HAP-1 (cell line): ENCODE measurements at regions of chr1 and their contacts with region 1.

Region 1: DNA sequence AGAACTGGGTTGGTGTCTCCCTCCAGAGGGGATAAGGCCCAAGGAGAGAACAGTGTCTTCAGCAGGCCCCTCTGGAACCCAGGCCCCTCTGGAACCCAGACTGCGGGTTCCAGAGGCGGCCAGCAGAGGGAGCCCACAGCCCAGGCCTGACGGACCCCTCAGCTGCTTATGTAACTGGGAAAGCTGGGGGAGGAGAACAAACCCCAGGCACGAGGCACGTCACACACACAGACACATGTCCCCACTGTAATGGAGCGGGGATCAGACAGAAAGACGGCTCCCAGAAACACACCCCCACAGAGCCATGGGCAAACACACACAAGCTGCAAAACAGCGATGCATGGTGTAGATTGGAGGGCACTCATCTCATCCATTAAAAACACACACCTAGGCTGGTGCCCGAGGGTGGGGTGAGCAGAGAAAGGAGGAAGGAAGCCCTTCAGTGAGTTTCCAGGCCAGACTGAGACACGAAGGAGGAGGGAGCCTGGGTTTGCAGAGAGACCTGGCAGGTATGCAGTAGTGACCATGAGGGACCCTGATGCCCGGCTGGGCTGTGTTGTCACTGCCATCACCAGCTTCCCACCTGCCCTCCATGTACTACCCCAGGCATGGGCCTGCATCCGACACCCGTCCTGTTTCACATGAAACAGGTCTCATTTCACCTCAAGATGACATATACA is 2.8 kb upstream of the IGSF8 start:
- DNase-seq: peak; percentile 74 to 88
- H3K4me3 ChIP-seq: no peak overlapping the region
- H3K4me1 ChIP-seq: peaks cover 18% of the 10 kb centered on the region
- H3K27me3 ChIP-seq: no peaks in the 10 kb centered on the region

Region 2: DNA sequence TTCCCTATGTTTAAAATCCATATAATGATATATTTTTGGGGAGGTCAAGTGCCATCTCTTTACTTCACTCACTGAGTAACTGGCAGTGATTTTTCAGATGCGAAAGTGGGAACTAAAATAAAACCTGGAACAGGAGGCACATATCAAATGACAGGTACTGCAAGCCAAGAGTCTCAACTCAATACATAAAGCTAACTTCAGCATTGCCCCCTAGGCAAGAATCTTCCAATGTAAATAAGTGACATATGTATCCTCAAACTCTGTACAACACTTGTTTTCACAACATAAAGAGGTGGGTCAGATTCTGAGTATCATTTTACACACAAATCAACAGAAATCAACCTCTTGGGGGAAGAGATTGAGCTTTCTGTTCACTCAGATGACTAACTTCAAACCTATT is 143.0 kb after region 1 on chr1:
- in situ Hi-C with region 1: loop called (anchors 10 kb)
- DNase-seq: no peak
- H3K4me3 ChIP-seq: no peak overlapping the region
- H3K4me1 ChIP-seq: peaks cover 11% of the 10 kb centered on the region
- H3K27me3 ChIP-seq: no peaks in the 10 kb centered on the region

Region 3: DNA sequence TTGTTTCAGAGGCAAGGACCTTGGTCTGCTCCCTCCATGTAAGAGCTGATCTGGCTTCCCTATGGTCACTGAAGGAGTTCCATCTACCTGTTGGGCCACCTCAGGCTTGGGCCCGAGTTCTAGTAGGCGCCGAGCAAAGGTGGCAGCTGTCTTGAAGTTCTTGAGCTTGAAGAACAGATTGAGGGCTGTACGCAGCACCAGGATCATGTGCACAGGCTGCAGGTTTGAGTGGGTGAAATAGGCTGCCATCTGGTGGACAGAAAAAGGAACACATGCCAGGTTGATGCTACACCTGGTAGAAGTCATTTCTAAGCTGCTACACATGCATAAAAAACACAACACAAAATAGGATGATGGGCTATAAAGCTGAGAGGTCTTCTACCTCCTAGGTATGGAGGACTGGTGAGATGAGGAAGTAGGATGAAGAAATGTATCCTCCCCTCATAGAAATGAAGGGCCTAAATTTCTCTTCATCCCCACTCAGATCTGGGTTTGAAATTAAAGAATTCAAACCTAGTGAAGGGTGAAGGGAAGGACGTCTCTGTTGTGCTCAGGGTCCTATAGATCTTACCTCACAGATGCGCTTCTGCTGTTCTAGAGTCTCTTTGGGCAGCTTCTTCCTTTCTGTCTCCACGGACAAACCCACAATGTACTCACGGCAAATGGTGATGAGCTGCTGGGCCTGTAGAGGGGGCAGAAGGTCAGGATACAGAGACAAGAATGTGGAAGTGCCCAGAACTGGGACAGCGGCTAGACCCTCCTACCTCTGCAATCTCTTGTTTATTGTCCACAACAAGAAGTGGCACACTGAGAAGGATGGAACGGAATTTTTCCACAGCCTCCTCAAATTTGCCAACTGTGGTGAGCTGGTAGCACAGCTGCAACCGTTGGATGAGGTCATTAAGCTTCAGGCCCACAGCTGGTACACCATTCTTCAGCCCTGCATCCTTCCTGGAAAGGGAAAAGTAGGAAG is 190.4 kb after region 1 on chr1:
- in situ Hi-C with region 1: loop called (anchors 5 kb)
- DNase-seq: peak; percentile 62 to 71
- H3K4me3 ChIP-seq: no peak overlapping the region
- H3K4me1 ChIP-seq: no peaks in the 10 kb centered on the region
- H3K27me3 ChIP-seq: no peaks in the 10 kb centered on the region